Naive thymus-derived CD4-positive, alpha-beta T cell (primary cell): ENCODE measurements at regions of chr9 and their contacts with region 1.

Region 1: DNA sequence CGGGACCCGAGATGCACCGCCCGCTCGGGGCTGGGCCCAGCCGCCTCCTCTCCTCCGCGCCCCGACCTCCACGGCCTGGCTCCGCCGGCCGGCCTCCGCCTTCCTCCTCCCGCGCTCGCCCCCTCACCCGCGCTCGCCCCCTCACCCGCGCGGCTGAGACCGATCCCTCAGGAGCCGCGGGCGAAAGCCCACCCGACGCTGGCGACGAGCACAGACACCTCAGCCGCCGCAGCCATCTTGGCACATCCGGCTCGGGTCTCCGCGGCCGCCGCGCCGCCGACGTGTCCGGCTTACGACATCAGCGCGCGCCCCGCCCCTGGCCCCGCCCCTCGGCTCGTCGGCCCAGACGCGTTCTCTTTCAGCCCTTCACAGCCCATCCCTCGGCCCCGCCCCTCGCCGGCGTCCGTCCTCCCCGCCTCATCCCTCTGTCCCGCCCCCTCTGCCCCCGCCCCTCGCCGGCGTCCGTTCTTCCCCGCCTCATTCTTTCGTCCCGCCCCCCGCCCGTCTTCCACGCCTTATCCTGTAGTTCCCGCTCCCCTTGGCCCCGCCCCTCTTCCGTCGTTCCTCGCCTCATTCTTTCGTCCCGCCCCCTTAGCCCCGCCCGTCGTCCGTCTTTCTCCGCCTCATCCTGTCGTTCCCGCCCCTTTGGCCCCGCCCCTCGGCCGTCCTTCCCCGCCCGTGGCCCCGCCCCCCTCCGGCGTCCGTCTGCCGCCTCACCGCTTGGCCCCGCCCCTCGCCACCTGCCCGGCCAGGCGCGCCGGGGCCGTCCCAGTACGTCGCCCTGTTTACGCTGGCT is at the start of gene SEC16A:
- DNase-seq: peak; percentile 97 to 100 (median 99)
- ATAC-seq: peak; percentile 85
- H3K4me3 ChIP-seq: peak within 1 kb of the TSS; percentile 93
- H3K4me3 Mint-ChIP-seq: peak within 1 kb of the TSS; percentile 86 to 99 (median 97)
- H3K27ac ChIP-seq: peak within 1 kb of the TSS; percentile 97
- H3K27ac Mint-ChIP-seq: peak within 1 kb of the TSS; percentile 86 to 99 (median 98)
- H3K4me1 ChIP-seq: peaks cover 17 to 30% of the 10 kb centered on the region in 2 donors
- H3K4me1 Mint-ChIP-seq: peaks cover 20 to 47% (median 39%) of the 10 kb centered on the region in 7 donors
- H3K27me3 ChIP-seq: no peaks in the 10 kb centered on the region
- H3K27me3 Mint-ChIP-seq: no peaks in the 10 kb centered on the region
- total RNA-seq, gene SEC16A: 79.8 to 88.5 (median 86.1) TPM

Region 2: DNA sequence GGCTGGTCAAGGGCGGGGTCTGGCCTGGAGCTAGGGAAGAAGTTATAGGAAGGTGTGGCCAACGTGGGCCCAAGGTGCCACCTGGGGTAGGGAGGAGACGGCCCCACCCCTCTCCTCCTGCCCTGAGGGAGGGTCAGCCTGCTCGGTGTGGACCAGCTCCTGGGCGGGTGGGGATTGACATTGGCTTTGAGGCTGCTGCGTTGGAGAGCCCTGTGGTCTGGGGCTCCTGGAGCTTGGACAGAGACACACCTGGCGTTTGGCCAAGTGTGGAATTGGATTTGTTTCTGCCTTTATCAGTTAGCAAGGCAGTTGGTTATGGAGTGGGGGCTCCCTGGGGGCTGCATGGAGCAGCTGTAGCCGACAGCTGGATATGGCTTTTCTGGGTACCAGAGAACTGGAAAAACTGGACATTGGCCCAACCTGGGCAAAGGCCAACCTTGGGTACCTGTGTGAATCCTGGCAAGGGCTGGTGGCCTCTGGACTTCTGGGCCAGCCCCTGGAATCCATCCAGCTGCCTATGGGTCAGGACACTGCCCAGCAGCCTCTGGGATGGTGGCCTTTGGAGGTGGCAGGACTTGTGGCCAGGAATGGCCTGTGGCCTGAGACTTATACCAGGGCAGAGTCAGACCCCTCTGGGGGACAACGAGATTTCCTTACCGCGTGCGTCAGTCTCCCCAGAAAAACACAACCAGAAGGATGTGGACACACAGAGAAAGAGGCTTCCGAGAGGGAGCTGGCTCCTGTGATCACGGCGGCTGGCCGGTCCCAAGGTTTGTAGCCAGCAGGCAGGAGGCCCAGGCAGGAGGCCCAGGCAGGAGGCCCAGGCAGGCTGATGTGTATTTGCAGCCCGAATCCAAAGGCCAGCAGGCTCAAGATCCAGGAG is 1078.9 kb before region 1 on chr9:
- CTCF ChIA-PET with region 1: no interaction called
- POLR2A ChIA-PET with region 1: no interaction called
- intact Hi-C with region 1: no loop called
- DNase-seq: no peak
- ATAC-seq: no peak
- H3K4me3 ChIP-seq: no peak overlapping the region
- H3K4me3 Mint-ChIP-seq: no peak overlapping the region
- H3K27ac ChIP-seq: no peak overlapping the region
- H3K27ac Mint-ChIP-seq: no peak overlapping the region
- H3K4me1 ChIP-seq: no peaks in the 10 kb centered on the region
- H3K4me1 Mint-ChIP-seq: no peaks in the 10 kb centered on the region
- H3K27me3 ChIP-seq: no peaks in the 10 kb centered on the region
- H3K27me3 Mint-ChIP-seq: peaks cover 0 to 9% (median 3%) of the 10 kb centered on the region in 5 donors

Region 3: DNA sequence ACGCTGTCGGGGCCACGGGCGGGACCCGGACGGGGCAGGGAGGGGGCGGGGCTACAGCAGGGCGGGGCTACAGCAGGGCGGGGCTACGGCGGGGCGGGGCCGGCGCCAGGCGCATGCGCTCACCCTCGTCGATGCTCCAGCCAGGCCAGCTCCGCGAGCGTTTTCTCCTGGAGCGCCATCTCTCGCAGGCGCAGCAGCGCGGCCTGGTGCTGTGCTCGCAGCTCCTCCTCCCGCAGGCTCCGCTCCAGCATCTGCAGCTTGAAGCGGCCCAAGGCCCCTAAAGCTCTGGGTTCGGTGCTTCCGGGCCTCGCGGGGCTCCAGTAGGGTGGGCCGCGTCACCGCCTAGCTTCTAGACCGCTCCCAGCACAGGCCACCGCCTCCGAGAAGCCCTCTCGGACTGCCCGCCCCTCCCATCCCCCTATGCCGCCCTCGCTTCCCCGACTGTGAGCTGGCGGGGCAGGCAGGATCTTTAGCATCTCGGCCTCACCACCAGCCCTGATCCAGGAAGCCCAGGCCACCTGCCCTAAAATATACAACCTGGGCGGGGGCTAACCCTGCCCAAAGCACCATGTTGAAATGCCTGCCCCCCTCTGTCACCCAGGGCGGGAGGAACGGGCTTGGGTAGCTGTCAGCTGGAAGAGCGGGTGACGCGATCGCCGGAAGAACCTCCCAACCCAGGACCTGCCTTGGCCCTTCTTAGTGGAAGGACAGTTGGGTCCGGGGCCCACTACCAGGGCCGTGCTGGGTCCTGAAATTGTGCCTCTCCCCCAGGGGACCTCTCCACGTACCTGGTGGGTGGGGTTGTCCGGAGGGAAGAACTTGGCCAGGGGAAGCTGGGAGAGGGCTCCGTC is 215.5 kb before region 1 on chr9:
- CTCF ChIA-PET with region 1: no interaction called
- POLR2A ChIA-PET with region 1: no interaction called
- intact Hi-C with region 1: loop called in 1 of 2 experiments (anchors 5 kb)
- DNase-seq: peak; percentile 70 to 85 (median 80)
- ATAC-seq: peak; percentile 99
- H3K4me3 ChIP-seq: peak overlapping the region; percentile 74
- H3K4me3 Mint-ChIP-seq: peak overlapping the region; percentile 70 to 84 (median 79)
- H3K27ac ChIP-seq: peak overlapping the region; percentile 62
- H3K27ac Mint-ChIP-seq: peak overlapping the region; percentile 57 to 89 (median 77)
- H3K4me1 ChIP-seq: peaks cover 4 to 7% of the 10 kb centered on the region in 2 donors
- H3K4me1 Mint-ChIP-seq: peaks cover 0 to 14% (median 3%) of the 10 kb centered on the region in 7 donors
- H3K27me3 ChIP-seq: no peaks in the 10 kb centered on the region
- H3K27me3 Mint-ChIP-seq: peaks cover 0 to 14% (median 0%) of the 10 kb centered on the region in 5 donors

Region 4: DNA sequence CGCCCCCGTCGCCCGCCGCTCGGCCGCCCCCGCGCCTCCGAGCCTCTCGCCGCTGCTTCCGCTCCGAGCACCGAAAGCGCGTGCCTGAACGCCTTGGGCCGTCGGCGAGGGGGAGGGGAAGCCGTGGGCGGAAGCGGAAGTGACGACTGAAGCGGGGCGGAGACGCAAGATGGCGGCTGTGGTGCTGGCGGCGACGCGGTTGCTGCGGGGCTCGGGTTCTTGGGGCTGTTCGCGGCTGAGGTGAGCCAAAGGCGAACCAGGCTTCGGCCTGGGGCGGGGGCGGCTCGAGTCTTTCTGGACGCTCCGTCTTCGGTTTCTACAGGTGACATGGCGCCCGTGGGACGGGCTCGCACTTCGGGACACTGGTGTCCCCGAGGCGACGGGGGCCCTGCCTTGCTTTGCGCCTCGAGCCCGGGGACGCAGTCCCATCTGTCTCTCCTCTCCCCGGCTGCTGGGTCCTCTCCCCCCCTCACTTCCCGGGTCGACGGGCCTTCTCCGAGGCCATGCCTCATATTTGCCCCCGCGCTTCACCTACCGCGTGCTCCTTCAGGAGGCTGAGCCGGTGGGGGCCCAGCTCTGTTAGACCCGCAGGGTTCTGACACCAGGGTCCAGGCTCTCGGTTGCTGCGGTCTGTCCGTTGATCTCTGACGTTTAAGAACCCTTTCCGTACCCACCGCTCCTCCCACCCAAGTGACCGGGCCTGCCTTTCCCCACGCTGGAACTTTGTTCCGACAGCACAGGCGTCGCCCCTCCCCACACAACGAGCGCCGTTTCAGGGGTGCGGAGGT is 72.3 kb before region 1 on chr9 and contains the starts of genes ENTR1 and PMPCA:
- CTCF ChIA-PET with region 1: no interaction called
- POLR2A ChIA-PET with region 1: interaction called, 4 read pairs
- intact Hi-C with region 1: loop called (anchors 1 to 2 kb)
- DNase-seq: peak; percentile 90 to 99 (median 93)
- ATAC-seq: peak; percentile 94
- H3K4me3 ChIP-seq: peak within 1 kb of the TSS; percentile 96
- H3K4me3 Mint-ChIP-seq: peak within 1 kb of the TSS; percentile 83 to 93 (median 90)
- H3K27ac ChIP-seq: peak within 1 kb of the TSS; percentile 97
- H3K27ac Mint-ChIP-seq: peak within 1 kb of the TSS; percentile 78 to 95 (median 90)
- H3K4me1 ChIP-seq: peaks cover 18 to 26% of the 10 kb centered on the region in 2 donors
- H3K4me1 Mint-ChIP-seq: peaks cover 34 to 56% (median 45%) of the 10 kb centered on the region in 7 donors
- H3K27me3 ChIP-seq: no peaks in the 10 kb centered on the region
- H3K27me3 Mint-ChIP-seq: no peaks in the 10 kb centered on the region
- total RNA-seq, gene ENTR1: 56.3 to 89.0 (median 66.6) TPM
- total RNA-seq, gene PMPCA: 60.5 to 86.3 (median 71.6) TPM

Region 5: GRCh38 chr9:136631038-136632000 is 148.3 kb after region 1 on chr9:
- CTCF ChIA-PET with region 1: interaction called, 75 read pairs
- POLR2A ChIA-PET with region 1: interaction called, 6 read pairs
- intact Hi-C with region 1: loop called in 1 of 2 experiments (anchors 1 kb)
- DNase-seq: peak; percentile 67 to 87 (median 78)
- ATAC-seq: peak; percentile 98
- H3K4me3 ChIP-seq: no peak overlapping the region
- H3K4me3 Mint-ChIP-seq: no peak overlapping the region
- H3K27ac ChIP-seq: no peak overlapping the region
- H3K27ac Mint-ChIP-seq: no peak overlapping the region
- H3K4me1 ChIP-seq: peaks cover 0 to 9% of the 10 kb centered on the region in 2 donors
- H3K4me1 Mint-ChIP-seq: peaks cover 0 to 4% (median 0%) of the 10 kb centered on the region in 7 donors
- H3K27me3 ChIP-seq: no peaks in the 10 kb centered on the region
- H3K27me3 Mint-ChIP-seq: peaks cover 0 to 5% (median 0%) of the 10 kb centered on the region in 5 donors

Region 6: DNA sequence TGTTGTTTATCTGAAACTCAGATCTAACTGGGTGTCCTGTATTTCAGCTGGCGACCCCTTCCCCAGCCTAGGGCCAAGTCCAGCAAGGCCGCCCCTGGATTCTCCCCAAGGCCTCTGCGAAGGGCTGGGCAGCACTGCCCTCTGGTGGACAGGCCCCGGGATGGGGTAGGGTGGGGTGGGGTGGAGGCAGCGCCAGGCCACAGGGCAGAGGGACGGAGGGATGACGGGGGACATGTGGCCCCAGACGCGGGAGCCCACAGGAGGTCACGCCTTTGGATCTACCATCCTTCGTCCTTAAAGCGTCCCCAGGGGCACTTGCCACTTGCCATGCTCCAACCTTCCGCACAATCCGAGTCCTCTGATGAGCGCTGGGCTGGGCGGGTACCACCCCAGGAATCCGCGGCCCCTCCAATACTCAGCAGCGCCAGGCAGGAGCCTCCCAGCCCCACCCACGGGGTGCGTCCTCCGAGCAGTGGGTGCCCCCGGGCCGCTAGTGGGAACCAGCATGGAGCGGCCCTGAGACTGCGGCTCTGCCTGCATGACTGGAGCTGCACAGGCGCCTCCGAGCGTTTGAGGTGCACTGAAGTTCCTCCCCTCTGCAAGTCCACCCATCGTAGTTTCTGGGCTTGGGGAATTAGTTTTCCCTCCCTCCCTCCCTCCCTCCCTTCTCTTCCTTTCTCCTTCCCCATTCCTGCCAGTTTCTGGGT is 211.4 kb after region 1 on chr9:
- CTCF ChIA-PET with region 1: no interaction called
- POLR2A ChIA-PET with region 1: no interaction called
- intact Hi-C with region 1: loop called in 1 of 2 experiments (anchors 1 kb)
- DNase-seq: peak in 1 of 9 donors; percentile 53
- ATAC-seq: peak; percentile 70
- H3K4me3 ChIP-seq: no peak overlapping the region
- H3K4me3 Mint-ChIP-seq: no peak overlapping the region
- H3K27ac ChIP-seq: no peak overlapping the region
- H3K27ac Mint-ChIP-seq: no peak overlapping the region
- H3K4me1 ChIP-seq: no peaks in the 10 kb centered on the region
- H3K4me1 Mint-ChIP-seq: peaks cover 0 to 8% (median 0%) of the 10 kb centered on the region in 7 donors
- H3K27me3 ChIP-seq: no peaks in the 10 kb centered on the region
- H3K27me3 Mint-ChIP-seq: peaks cover 0 to 9% (median 5%) of the 10 kb centered on the region in 5 donors

Region 7: GRCh38 chr9:136799854-136800657 is 317.1 kb after region 1 on chr9:
- CTCF ChIA-PET with region 1: no interaction called
- POLR2A ChIA-PET with region 1: no interaction called
- intact Hi-C with region 1: loop called in 1 of 2 experiments (anchors 1 kb)
- DNase-seq: peak; percentile 58 to 89 (median 79)
- ATAC-seq: peak; percentile 90
- H3K4me3 ChIP-seq: peak overlapping the region; percentile 63
- H3K4me3 Mint-ChIP-seq: peak overlapping the region; percentile 82 to 92 (median 86)
- H3K27ac ChIP-seq: peak overlapping the region; percentile 59
- H3K27ac Mint-ChIP-seq: peak overlapping the region in 4 of 9 donors; percentile 25 to 81 (median 78)
- H3K4me1 ChIP-seq: peaks cover 10 to 24% of the 10 kb centered on the region in 2 donors
- H3K4me1 Mint-ChIP-seq: peaks cover 6 to 42% (median 35%) of the 10 kb centered on the region in 7 donors
- H3K27me3 ChIP-seq: no peaks in the 10 kb centered on the region
- H3K27me3 Mint-ChIP-seq: peaks cover 0 to 45% (median 0%) of the 10 kb centered on the region in 5 donors

Region 8: DNA sequence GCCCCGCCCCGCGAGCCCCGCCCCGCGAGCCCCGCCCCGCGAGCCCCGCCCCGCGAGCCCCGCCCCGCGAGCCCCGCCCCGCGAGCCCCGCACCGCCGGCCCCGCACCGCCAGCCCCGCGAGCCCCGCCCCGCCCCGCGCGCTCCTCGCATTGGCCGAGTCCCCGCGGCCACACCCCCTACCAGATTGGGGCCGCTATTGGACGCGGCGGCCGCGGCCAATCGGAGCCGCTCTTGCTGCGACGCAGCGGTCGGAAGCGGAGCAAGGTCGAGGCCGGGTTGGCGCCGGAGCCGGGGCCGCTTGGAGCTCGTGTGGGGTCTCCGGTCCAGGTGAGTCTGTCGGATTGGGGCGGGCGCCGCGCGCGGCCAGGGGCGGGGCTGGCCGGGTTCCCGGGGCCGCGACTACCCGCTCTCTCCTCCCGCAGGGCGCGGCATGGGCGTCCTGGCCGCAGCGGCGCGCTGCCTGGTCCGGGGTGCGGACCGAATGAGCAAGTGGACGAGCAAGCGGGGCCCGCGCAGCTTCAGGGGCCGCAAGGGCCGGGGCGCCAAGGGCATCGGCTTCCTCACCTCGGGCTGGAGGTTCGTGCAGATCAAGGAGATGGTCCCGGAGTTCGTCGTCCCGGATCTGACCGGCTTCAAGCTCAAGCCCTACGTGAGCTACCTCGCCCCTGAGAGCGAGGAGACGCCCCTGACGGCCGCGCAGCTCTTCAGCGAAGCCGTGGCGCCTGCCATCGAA is 1068.8 kb after region 1 on chr9 and contains the start of gene MRPL41:
- CTCF ChIA-PET with region 1: no interaction called
- POLR2A ChIA-PET with region 1: no interaction called
- intact Hi-C with region 1: loop called (anchors 2 to 5 kb)
- DNase-seq: peak; percentile 77 to 96 (median 85)
- ATAC-seq: peak; percentile 94
- H3K4me3 ChIP-seq: peak within 1 kb of the TSS; percentile 77
- H3K4me3 Mint-ChIP-seq: peak within 1 kb of the TSS; percentile 82 to 96 (median 90)
- H3K27ac ChIP-seq: peak within 1 kb of the TSS; percentile 85
- H3K27ac Mint-ChIP-seq: peak within 1 kb of the TSS; percentile 77 to 91 (median 83)
- H3K4me1 ChIP-seq: peaks cover 0 to 6% of the 10 kb centered on the region in 2 donors
- H3K4me1 Mint-ChIP-seq: peaks cover 11 to 24% (median 17%) of the 10 kb centered on the region in 7 donors
- H3K27me3 ChIP-seq: no peaks in the 10 kb centered on the region
- H3K27me3 Mint-ChIP-seq: no peaks in the 10 kb centered on the region
- total RNA-seq, gene MRPL41: 41.1 to 102 (median 53.9) TPM